Activated CD4-positive, alpha-beta memory T cell treated with anti-CD3 and anti-CD28 coated beads for 36 hours (primary cell): ENCODE measurements at regions of chr10 and their contacts with region 1.

Region 1: GRCh38 chr10:15836807-15837206 is 23.5 kb downstream of the MINDY3 start:
- DNase-seq: no peak
- H3K4me3 Mint-ChIP-seq: no peak overlapping the region
- H3K27ac Mint-ChIP-seq: no peak overlapping the region
- H3K4me1 Mint-ChIP-seq: peaks cover 10% of the 10 kb centered on the region
- H3K27me3 Mint-ChIP-seq: no peaks in the 10 kb centered on the region

Region 2: GRCh38 chr10:15784717-15785211 is 52.0 kb before region 1 on chr10:
- CTCF ChIA-PET with region 1: no interaction called
- POLR2A ChIA-PET with region 1: no interaction called
- intact Hi-C with region 1: no loop called
- DNase-seq: no peak
- H3K4me3 Mint-ChIP-seq: no peak overlapping the region
- H3K27ac Mint-ChIP-seq: no peak overlapping the region
- H3K4me1 Mint-ChIP-seq: peaks cover 1% of the 10 kb centered on the region
- H3K27me3 Mint-ChIP-seq: no peaks in the 10 kb centered on the region

Region 3: GRCh38 chr10:15795036-15795792 is 41.6 kb before region 1 on chr10:
- CTCF ChIA-PET with region 1: no interaction called
- POLR2A ChIA-PET with region 1: no interaction called
- intact Hi-C with region 1: loop called (anchors 5 kb)
- DNase-seq: no peak
- H3K4me3 Mint-ChIP-seq: no peak overlapping the region
- H3K27ac Mint-ChIP-seq: peak overlapping the region; percentile 19
- H3K4me1 Mint-ChIP-seq: peaks cover 12% of the 10 kb centered on the region
- H3K27me3 Mint-ChIP-seq: no peaks in the 10 kb centered on the region

Region 4: DNA sequence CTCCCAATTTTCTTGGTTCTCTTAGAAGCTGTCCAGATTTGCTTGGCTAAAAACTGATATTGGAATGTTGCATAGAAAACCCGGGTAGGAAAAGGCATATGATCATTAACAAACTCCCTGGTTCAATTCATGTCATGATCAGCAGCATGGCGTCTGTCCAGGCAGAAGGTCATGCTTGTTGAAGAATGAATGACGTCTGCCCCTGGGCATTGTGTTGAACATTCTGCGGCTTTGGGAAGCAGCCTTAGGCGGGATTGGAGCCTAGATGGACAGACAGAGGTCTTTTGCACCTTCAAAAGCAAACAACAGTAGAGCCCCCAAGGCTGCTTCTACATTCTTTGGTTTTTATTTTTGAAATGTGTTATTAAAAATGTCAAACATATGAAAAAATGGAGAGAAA is 31.2 kb after region 1 on chr10:
- CTCF ChIA-PET with region 1: no interaction called
- POLR2A ChIA-PET with region 1: no interaction called
- intact Hi-C with region 1: no loop called
- DNase-seq: no peak
- H3K4me3 Mint-ChIP-seq: no peak overlapping the region
- H3K27ac Mint-ChIP-seq: no peak overlapping the region
- H3K4me1 Mint-ChIP-seq: no peaks in the 10 kb centered on the region
- H3K27me3 Mint-ChIP-seq: peaks cover 57% of the 10 kb centered on the region